ENCODE measurements at regions of chr2 and their contacts with region 1.

Region 1: GRCh38 chr2:96638144-96639121 is at the start of gene KANSL3:
- DNase-seq: peak; percentile 94
- ATAC-seq: peak; percentile 90
- H3K4me3 Mint-ChIP-seq: peak within 1 kb of the TSS; percentile 93
- H3K27ac Mint-ChIP-seq: peak within 1 kb of the TSS; percentile 87
- H3K4me1 Mint-ChIP-seq: peaks cover 36% of the 10 kb centered on the region
- H3K27me3 Mint-ChIP-seq: no peaks in the 10 kb centered on the region
- CTCF ChIP-seq: no peak
- total RNA-seq, gene KANSL3: 24.6 and 31.4 TPM in 2 replicates

Region 2: DNA sequence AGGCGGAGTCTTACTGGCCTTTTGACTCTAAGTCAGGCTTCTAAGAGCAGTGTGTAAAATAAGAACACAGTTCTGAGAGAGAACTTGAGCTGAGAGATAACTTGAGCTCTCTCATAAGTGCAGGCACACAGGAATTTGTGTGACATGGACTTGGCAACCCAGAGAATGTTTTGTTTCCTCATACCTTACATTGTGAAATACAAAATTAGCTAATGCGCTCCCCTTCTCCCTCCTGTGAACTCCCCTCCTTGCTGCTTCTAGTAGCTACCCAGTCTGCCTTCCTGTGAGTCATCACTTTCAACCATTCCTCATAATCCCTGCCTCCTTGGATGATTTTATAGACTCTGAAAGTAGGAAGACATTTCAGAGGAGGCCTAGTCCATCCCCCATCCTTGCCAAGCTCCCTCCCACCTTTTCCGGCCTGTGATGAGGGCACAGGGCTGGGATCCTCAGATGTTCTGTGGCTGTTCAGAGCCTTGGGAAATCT is 26.7 kb after region 1 on chr2:
- CTCF ChIA-PET with region 1: no interaction called
- POLR2A ChIA-PET with region 1: no interaction called
- intact Hi-C with region 1: no loop called
- DNase-seq: no peak
- ATAC-seq: no peak
- H3K4me3 Mint-ChIP-seq: no peak overlapping the region
- H3K27ac Mint-ChIP-seq: no peak overlapping the region
- H3K4me1 Mint-ChIP-seq: no peaks in the 10 kb centered on the region
- H3K27me3 Mint-ChIP-seq: peaks cover 2% of the 10 kb centered on the region
- CTCF ChIP-seq: no peak

Region 3: GRCh38 chr2:96739633-96740428 is 101.4 kb after region 1 on chr2 and contains the start of gene LMAN2L:
- CTCF ChIA-PET with region 1: no interaction called
- POLR2A ChIA-PET with region 1: interaction called, 3 read pairs
- intact Hi-C with region 1: loop called (anchors 1 kb)
- DNase-seq: peak; percentile 88
- ATAC-seq: peak; percentile 99
- H3K4me3 Mint-ChIP-seq: peak within 1 kb of the TSS; percentile 98
- H3K27ac Mint-ChIP-seq: peak within 1 kb of the TSS; percentile 94
- H3K4me1 Mint-ChIP-seq: peaks cover 33% of the 10 kb centered on the region
- H3K27me3 Mint-ChIP-seq: no peaks in the 10 kb centered on the region
- CTCF ChIP-seq: no peak
- total RNA-seq, gene LMAN2L: 7.1 and 8.9 TPM in 2 replicates

Region 4: DNA sequence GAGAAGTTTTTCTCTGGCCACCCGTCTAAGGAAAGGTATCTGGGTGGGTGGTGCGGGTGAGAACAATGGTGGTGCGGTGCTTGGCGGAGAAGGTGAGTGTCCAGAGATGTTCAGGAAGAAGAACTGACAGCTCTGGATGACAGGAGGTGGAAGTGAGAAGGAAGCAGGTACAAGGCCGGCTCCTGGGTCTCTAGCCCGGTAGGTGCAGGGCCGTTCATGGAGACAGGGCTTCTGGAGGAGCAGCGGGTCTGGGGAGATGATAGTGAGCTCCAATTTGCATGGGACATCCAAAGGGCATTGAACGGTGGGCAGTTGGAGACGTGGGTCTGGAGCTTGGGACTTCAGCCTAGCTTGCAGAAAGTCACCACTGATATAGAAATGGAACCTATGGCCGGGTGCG is 457.2 kb after region 1 on chr2:
- CTCF ChIA-PET with region 1: no interaction called
- POLR2A ChIA-PET with region 1: no interaction called
- intact Hi-C with region 1: no loop called
- DNase-seq: no peak
- ATAC-seq: no peak
- H3K4me3 Mint-ChIP-seq: peak overlapping the region; percentile 79
- H3K27ac Mint-ChIP-seq: peak overlapping the region; percentile 19
- H3K4me1 Mint-ChIP-seq: peaks cover 9% of the 10 kb centered on the region
- H3K27me3 Mint-ChIP-seq: peaks cover 3% of the 10 kb centered on the region
- CTCF ChIP-seq: no peak

Region 5: GRCh38 chr2:97645695-97646629 is 1007.5 kb after region 1 on chr2 and contains the start of gene COX5B:
- CTCF ChIA-PET with region 1: no interaction called
- POLR2A ChIA-PET with region 1: no interaction called
- intact Hi-C with region 1: loop called (anchors 5 kb)
- DNase-seq: peak; percentile 94
- ATAC-seq: peak; percentile 98
- H3K4me3 Mint-ChIP-seq: peak within 1 kb of the TSS; percentile 94
- H3K27ac Mint-ChIP-seq: peak within 1 kb of the TSS; percentile 94
- H3K4me1 Mint-ChIP-seq: peaks cover 19% of the 10 kb centered on the region
- H3K27me3 Mint-ChIP-seq: no peaks in the 10 kb centered on the region
- CTCF ChIP-seq: no peak
- total RNA-seq, gene COX5B: 156 and 183 TPM in 2 replicates

Measured in activated B cell treated with CpG ODN at 0.5 μM for 24 hours (primary cell).